ENCODE measurements at regions of chr20 and their contacts with region 1.

Region 1: GRCh38 chr20:48421163-48421946 is 406.4 kb downstream of the PREX1 start:
- DNase-seq: no peak
- H3K4me3 ChIP-seq: no peak overlapping the region
- H3K27ac ChIP-seq: no peak overlapping the region
- H3K4me1 ChIP-seq: no peaks in the 10 kb centered on the region
- H3K27me3 ChIP-seq: no peaks in the 10 kb centered on the region
- CTCF ChIP-seq: no peak
- EP300 ChIP-seq: no peak
- POLR2A ChIP-seq: no peak
- RAD21 ChIP-seq: peak in 1 of 2 experiments; percentile 27; a peak in 1 of 4 replicates

Region 2: GRCh38 chr20:48405669-48406308 is 15.6 kb before region 1 on chr20:
- CTCF ChIA-PET with region 1: interaction called, 24 read pairs
- POLR2A ChIA-PET with region 1: no interaction called
- DNase-seq: peak in 1 of 2 experiments; percentile 68
- H3K4me3 ChIP-seq: no peak overlapping the region
- H3K27ac ChIP-seq: no peak overlapping the region
- H3K4me1 ChIP-seq: peaks cover 2 to 9% (median 6%) of the 10 kb centered on the region in 4 experiments; a peak in 5 of 7 replicates
- H3K27me3 ChIP-seq: no peaks in the 10 kb centered on the region; a peak in 1 of 7 replicates
- CTCF ChIP-seq: peak; percentile 43 to 70 (median 68); a peak in 3 of 4 replicates
- EP300 ChIP-seq: no peak
- POLR2A ChIP-seq: no peak
- RAD21 ChIP-seq: peak; percentile 53 to 67

Measured in H1 (cell line).